ENCODE measurements at regions of chr3 and their contacts with region 1.

Region 1: DNA sequence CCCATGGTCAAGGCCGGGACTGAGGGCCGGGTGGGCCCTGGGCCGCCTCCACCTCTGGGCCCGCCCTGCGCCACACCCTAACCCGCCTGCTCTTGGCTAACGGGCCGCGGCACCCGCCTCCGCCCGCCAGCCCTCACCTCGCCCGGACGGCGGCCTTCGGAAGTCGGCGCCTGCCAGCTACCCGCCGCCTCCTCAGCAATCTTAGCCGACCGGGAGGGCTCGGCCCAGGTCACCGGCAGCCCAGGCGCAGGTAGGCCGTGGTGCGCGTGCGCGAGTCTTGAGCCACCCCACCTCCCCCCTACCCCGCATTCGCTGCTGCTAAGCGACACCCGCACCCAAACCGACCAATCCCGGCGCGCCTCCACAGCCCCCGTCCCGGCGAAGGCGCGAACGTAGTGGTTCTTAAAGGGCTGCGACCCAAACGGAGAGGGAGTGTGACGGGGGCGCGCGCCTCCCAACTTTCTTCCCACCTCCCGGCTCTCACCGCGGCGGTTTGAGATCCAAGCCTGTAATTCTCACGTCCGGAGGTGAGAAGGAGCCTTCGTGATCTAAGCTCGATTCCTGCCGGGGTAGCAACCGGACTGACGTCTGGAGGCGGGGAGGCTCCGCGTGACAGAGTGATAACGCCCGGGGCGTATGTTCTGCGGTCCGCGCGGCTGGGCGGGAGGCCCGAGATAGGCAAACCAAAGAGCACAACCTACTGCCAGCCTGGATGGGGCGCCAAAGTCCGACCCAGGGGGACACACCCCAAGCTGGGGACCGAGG is at the start of gene SEC22C:
- DNase-seq: peak; percentile 88 to 97 (median 96)
- ATAC-seq: peak; percentile 88
- H3K4me3 ChIP-seq: peak within 1 kb of the TSS; percentile 70 to 88
- H3K4me3 Mint-ChIP-seq: peak within 1 kb of the TSS; percentile 92
- H3K27ac ChIP-seq: peak within 1 kb of the TSS; percentile 93 to 94
- H3K27ac Mint-ChIP-seq: peak within 1 kb of the TSS; percentile 98
- H3K4me1 ChIP-seq: peaks cover 22% of the 10 kb centered on the region
- H3K4me1 Mint-ChIP-seq: peaks cover 48% of the 10 kb centered on the region
- H3K27me3 ChIP-seq: no peaks in the 10 kb centered on the region
- H3K27me3 Mint-ChIP-seq: no peaks in the 10 kb centered on the region
- CTCF ChIP-seq: peak; percentile 32
- total RNA-seq, gene SEC22C: 71.3 to 75.2 TPM

Region 2: DNA sequence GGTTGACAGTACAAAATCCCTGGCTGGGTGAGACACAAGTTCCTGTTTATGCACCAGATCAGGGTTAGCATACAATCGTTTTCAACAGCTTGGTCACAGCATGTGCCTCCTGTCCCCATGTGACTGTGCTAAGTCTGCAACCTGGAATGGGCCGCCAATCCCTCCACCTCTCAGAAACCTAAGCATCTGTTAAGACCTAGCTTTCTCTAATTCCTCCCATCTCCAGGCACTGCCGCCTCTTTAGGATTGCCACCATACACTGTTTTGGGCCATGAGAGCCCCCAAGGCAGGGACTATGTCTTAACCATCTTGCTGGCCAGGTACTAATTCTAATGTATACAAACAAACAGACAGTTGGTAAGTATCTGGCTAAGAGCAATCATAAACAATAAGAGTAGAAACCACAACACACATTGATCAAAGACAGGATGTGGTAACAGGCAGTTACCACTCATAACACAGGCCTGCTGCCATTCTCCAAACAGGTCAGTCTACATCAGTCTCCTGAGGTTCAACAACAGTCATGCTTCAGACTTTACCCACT is 25.7 kb before region 1 on chr3:
- CTCF ChIA-PET with region 1: interaction called, 4 read pairs
- POLR2A ChIA-PET with region 1: interaction called, 7 read pairs
- intact Hi-C with region 1: loop called in 1 of 2 experiments (anchors 2 kb)
- DNase-seq: peak in 8 of 9 experiments; percentile 18 to 82 (median 58)
- ATAC-seq: peak; percentile 83
- H3K4me3 ChIP-seq: no peak overlapping the region
- H3K4me3 Mint-ChIP-seq: peak overlapping the region; percentile 59
- H3K27ac ChIP-seq: peak overlapping the region; percentile 42 to 55
- H3K27ac Mint-ChIP-seq: peak overlapping the region; percentile 97
- H3K4me1 ChIP-seq: peaks cover 21% of the 10 kb centered on the region
- H3K4me1 Mint-ChIP-seq: peaks cover 29% of the 10 kb centered on the region
- H3K27me3 ChIP-seq: no peaks in the 10 kb centered on the region
- H3K27me3 Mint-ChIP-seq: no peaks in the 10 kb centered on the region
- CTCF ChIP-seq: no peak

Region 3: DNA sequence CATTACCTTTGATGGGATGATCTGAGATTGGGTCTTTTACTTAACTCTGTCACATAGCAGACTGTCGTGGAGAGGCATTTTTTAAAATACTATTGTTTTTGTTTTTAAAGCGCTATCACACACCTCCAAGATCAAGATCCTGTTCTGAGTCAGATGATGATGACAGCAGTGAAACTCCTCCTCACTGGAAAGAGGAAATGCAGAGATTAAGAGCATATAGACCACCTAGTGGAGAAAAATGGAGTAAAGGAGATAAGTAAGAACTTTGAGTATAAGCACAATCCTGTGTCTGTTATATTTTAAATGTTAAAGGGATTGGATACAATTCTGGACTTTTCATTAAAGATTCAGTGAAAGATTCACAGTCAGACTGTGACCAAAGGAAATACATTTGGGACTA is 53.2 kb after region 1 on chr3:
- CTCF ChIA-PET with region 1: no interaction called
- POLR2A ChIA-PET with region 1: no interaction called
- intact Hi-C with region 1: loop called (anchors 5 kb)
- DNase-seq: peak in 1 of 9 experiments; percentile 51
- ATAC-seq: peak; percentile 51
- H3K4me3 ChIP-seq: no peak overlapping the region
- H3K4me3 Mint-ChIP-seq: no peak overlapping the region
- H3K27ac ChIP-seq: no peak overlapping the region
- H3K27ac Mint-ChIP-seq: no peak overlapping the region
- H3K4me1 ChIP-seq: peaks cover 11% of the 10 kb centered on the region
- H3K4me1 Mint-ChIP-seq: no peaks in the 10 kb centered on the region
- H3K27me3 ChIP-seq: no peaks in the 10 kb centered on the region
- H3K27me3 Mint-ChIP-seq: no peaks in the 10 kb centered on the region
- CTCF ChIP-seq: no peak

Region 4: DNA sequence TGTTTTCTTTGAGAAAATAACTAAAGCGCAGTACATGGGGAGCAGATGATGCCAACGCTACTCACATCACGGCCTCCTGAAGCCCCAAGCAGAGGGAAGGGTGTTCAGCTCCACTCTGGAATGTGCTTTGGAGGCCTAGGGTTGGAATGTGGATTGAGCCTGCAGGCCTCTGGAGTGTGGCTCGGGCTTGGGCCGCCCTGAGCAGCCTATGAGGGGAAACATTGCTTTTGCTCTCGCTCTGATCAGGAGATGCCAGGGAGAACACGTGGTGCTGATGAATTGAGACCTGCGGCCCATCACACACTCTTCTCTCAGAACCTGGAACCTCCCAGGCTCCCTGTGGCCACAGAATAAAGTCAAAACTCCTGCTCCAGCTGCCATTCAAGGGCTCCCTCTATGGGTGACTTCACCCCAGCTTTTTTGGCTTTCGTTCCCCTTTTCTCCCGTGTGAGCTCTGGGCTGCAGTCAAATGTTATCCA is 167.9 kb after region 1 on chr3:
- CTCF ChIA-PET with region 1: interaction called, 7 read pairs
- POLR2A ChIA-PET with region 1: no interaction called
- intact Hi-C with region 1: loop called (anchors 1 to 5 kb)
- DNase-seq: no peak
- ATAC-seq: no peak
- H3K4me3 ChIP-seq: no peak overlapping the region
- H3K4me3 Mint-ChIP-seq: no peak overlapping the region
- H3K27ac ChIP-seq: no peak overlapping the region
- H3K27ac Mint-ChIP-seq: no peak overlapping the region
- H3K4me1 ChIP-seq: peaks cover 12% of the 10 kb centered on the region
- H3K4me1 Mint-ChIP-seq: peaks cover 15% of the 10 kb centered on the region
- H3K27me3 ChIP-seq: no peaks in the 10 kb centered on the region
- H3K27me3 Mint-ChIP-seq: no peaks in the 10 kb centered on the region
- CTCF ChIP-seq: no peak

Region 5: DNA sequence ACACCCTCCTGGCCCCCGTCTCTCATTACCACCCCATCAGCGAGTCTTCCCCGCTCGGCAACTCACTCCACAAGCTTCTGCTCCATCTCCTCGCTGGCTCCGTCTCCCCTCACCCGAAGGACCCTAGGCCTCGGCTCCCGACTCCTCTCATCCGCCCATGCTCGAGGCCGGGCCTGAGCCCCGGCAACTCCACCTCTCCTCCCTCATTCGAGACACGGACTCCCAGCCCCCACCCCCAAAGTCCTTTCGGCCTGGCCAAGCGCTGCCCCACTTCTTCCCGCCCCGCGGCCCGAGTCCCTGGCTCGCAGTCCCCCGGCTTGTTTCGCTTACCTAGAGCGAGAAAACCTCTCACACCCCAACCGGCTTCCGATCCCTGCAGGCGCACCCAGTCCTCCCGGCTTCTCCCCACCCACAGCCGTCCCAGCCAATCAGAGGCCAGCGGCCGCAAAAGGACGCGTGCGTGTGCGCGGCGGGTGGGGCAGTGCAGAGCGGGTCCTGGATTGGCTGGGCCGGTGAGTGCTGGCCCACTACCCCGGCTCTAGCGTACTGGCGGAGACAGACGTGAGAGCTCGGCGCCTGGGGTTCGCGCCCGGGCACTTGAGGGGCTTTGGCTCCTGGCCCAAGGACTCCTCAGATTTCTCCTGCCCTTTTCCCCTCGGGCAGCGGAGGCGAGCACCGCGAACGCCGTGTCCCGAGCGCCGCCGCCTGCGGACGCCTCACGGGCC is 222.4 kb after region 1 on chr3 and contains the start of gene HIGD1A:
- CTCF ChIA-PET with region 1: no interaction called
- POLR2A ChIA-PET with region 1: no interaction called
- intact Hi-C with region 1: loop called in 1 of 2 experiments (anchors 10 kb)
- DNase-seq: peak; percentile 82 to 97 (median 92)
- ATAC-seq: peak; percentile 98
- H3K4me3 ChIP-seq: peak within 1 kb of the TSS; percentile 84 to 90
- H3K4me3 Mint-ChIP-seq: peak within 1 kb of the TSS; percentile 98
- H3K27ac ChIP-seq: peak within 1 kb of the TSS; percentile 68 to 87
- H3K27ac Mint-ChIP-seq: peak within 1 kb of the TSS; percentile 91
- H3K4me1 ChIP-seq: peaks cover 26% of the 10 kb centered on the region
- H3K4me1 Mint-ChIP-seq: peaks cover 49% of the 10 kb centered on the region
- H3K27me3 ChIP-seq: no peaks in the 10 kb centered on the region
- H3K27me3 Mint-ChIP-seq: peaks cover 4% of the 10 kb centered on the region
- CTCF ChIP-seq: no peak
- total RNA-seq, gene HIGD1A: 10.9 to 11.8 TPM

Region 6: DNA sequence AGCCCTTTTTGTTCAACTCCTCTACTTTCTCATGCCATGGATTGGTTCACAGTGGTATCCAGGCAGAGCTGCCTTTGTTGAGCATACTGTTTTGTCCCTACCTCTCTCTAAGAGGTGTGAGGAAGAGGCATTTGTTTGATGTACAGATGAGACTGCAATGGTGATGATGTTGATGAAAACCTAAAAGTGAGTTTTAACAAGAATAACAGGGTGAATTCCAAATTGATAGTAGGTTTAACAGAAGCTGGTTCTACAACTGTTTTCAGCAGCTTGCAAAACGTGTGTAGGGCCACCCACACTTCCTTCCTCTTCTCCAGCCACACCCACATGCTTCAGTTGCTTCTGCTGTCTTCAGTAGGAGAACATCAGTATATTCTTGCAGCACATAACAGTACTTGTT is 714.7 kb after region 1 on chr3:
- CTCF ChIA-PET with region 1: no interaction called
- POLR2A ChIA-PET with region 1: no interaction called
- intact Hi-C with region 1: loop called in 1 of 2 experiments (anchors 10 kb)
- DNase-seq: peak; percentile 22 to 92 (median 68)
- ATAC-seq: peak; percentile 88
- H3K4me3 ChIP-seq: peak overlapping the region; percentile 30 to 45
- H3K4me3 Mint-ChIP-seq: peak overlapping the region; percentile 87
- H3K27ac ChIP-seq: peak overlapping the region; percentile 57 to 87
- H3K27ac Mint-ChIP-seq: peak overlapping the region; percentile 96
- H3K4me1 ChIP-seq: peaks cover 89% of the 10 kb centered on the region
- H3K4me1 Mint-ChIP-seq: peaks cover 85% of the 10 kb centered on the region
- H3K27me3 ChIP-seq: no peaks in the 10 kb centered on the region
- H3K27me3 Mint-ChIP-seq: no peaks in the 10 kb centered on the region
- CTCF ChIP-seq: no peak